Activated CD8-positive, alpha-beta memory T cell treated with anti-CD3 and anti-CD28 coated beads, Interleukin-2, amount 10 ng/mL, durations not matched to agents 7 days and 5 days (primary cell): ENCODE measurements at regions of chr15 and their contacts with region 1.

Region 1: DNA sequence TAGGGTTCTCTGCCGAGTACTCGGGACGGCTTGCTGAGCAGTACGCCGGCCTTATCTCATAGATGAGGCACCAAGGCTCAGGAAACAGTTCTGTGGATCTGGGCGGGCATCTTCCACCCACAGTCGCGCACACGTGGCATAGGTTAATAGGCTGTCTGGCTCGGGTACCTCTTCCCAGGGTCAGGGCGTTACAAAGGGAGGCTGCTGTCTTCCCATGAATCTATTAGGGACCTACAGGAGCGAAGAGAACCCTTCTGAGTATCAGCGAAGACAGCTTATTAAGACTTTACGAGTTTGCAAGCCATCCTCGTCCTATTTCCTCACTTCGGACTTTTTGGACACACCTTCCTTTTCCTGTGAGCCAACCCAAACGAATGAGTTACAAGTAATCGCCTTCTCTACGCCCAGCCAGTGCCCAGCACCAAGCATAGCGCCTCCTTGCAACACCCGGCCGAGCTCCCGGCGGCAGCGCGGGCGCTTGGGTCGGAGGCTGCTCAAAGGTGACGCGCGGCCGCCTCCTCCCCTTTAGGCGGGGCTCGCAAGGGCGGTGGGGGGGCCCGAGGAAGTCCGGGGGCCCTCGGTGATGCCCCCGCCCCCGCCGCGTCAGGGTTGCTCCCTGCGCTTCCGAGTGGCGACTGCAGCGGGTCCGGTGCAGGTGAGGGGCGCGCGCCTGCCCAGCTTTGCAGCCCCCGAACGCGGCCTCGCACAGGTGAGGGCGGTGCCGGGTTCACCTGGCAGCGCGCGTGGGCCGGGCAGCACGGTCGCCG is at the start of gene MCTP2:
- DNase-seq: peak; percentile 95
- ATAC-seq: peak; percentile 90
- H3K4me3 Mint-ChIP-seq: peak within 1 kb of the TSS; percentile 84
- H3K27ac Mint-ChIP-seq: peak within 1 kb of the TSS; percentile 92
- H3K4me1 Mint-ChIP-seq: peaks cover 69% of the 10 kb centered on the region
- H3K27me3 Mint-ChIP-seq: no peaks in the 10 kb centered on the region
- total RNA-seq, gene MCTP2: 67.2 to 83.8 TPM

Region 2: DNA sequence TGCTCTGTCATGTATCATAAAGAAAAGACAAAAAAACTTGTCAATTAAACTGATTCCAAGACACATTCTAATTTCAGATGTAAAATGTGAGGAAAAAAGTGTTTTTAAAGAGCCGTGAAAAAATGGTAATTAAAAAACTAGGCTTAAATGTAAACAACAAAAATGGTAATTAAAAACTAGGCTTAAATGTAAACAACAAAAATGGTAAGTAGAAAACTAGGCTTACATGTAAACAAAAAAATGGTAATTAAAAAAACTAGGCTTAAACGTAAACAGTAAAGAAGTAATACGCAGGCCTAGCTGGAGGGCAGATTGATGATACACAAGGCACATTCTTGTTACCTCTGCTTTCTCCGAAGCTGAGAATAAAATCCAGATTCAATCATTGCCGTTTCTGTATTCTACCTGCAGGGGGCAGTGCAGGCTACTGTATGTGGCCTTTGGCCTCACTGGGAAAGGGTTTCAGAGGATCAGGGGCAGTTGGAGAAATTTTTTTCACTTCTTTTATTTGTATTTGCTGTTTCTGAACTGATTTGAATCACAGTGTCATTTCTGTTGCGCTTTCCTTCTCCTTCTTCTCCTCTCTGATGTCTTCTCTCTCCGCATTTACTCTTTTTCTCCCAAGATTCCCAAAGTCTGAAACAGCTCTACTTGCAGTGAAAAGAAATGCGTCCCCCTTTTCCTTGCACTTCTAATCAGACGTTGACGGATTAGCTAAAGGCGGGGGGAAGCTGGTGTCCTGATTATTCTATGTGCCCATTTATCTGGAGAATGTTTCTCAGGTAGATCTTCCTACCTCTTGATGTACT is 66.9 kb before region 1 on chr15:
- CTCF ChIA-PET with region 1: interaction called, 25 read pairs
- DNase-seq: peak; percentile 76
- ATAC-seq: peak; percentile 83
- H3K4me3 Mint-ChIP-seq: no peak overlapping the region
- H3K27ac Mint-ChIP-seq: no peak overlapping the region
- H3K4me1 Mint-ChIP-seq: peaks cover 13% of the 10 kb centered on the region
- H3K27me3 Mint-ChIP-seq: peaks cover 21% of the 10 kb centered on the region

Region 3: GRCh38 chr15:94174399-94174802 is 56.7 kb before region 1 on chr15:
- CTCF ChIA-PET with region 1: interaction called, 12 read pairs
- DNase-seq: peak; percentile 57
- ATAC-seq: peak; percentile 90
- H3K4me3 Mint-ChIP-seq: no peak overlapping the region
- H3K27ac Mint-ChIP-seq: peak overlapping the region; percentile 49
- H3K4me1 Mint-ChIP-seq: peaks cover 42% of the 10 kb centered on the region
- H3K27me3 Mint-ChIP-seq: peaks cover 4% of the 10 kb centered on the region

Region 4: DNA sequence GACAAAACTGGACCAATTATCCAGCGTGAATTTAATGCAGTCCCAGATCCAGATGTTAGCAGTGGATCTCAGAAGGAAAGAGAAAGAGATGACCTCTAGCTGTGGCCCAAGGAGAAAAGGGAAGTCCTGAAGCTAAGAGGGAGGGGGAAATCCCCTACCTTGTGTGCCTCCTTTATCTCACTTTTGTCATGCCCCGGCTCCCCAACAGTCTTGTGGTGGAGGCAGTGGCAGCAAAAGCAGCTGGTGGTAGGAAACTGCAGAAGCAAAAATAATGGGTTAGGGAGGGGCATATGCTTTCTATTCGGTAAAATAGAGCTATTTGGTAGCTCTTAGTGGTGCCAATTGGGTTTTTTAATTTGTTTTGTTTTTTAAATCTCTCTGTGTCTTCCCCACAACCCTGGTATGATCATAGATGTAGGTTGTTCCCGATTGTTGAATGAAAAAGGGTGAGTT is 56.7 kb after region 1 on chr15:
- CTCF ChIA-PET with region 1: interaction called, 20 read pairs
- DNase-seq: peak; percentile 87
- ATAC-seq: peak; percentile 94
- H3K4me3 Mint-ChIP-seq: peak overlapping the region; percentile 76
- H3K27ac Mint-ChIP-seq: peak overlapping the region; percentile 92
- H3K4me1 Mint-ChIP-seq: peaks cover 61% of the 10 kb centered on the region
- H3K27me3 Mint-ChIP-seq: no peaks in the 10 kb centered on the region

Region 5: GRCh38 chr15:94306700-94307650 is 75.8 kb after region 1 on chr15:
- CTCF ChIA-PET with region 1: interaction called, 40 read pairs
- DNase-seq: peak; percentile 73
- ATAC-seq: peak; percentile 58
- H3K4me3 Mint-ChIP-seq: peak overlapping the region; percentile 56
- H3K27ac Mint-ChIP-seq: peak overlapping the region; percentile 96
- H3K4me1 Mint-ChIP-seq: peaks cover 81% of the 10 kb centered on the region
- H3K27me3 Mint-ChIP-seq: no peaks in the 10 kb centered on the region